ENCODE measurements at regions of chr12 and their contacts with region 1.

Region 1: DNA sequence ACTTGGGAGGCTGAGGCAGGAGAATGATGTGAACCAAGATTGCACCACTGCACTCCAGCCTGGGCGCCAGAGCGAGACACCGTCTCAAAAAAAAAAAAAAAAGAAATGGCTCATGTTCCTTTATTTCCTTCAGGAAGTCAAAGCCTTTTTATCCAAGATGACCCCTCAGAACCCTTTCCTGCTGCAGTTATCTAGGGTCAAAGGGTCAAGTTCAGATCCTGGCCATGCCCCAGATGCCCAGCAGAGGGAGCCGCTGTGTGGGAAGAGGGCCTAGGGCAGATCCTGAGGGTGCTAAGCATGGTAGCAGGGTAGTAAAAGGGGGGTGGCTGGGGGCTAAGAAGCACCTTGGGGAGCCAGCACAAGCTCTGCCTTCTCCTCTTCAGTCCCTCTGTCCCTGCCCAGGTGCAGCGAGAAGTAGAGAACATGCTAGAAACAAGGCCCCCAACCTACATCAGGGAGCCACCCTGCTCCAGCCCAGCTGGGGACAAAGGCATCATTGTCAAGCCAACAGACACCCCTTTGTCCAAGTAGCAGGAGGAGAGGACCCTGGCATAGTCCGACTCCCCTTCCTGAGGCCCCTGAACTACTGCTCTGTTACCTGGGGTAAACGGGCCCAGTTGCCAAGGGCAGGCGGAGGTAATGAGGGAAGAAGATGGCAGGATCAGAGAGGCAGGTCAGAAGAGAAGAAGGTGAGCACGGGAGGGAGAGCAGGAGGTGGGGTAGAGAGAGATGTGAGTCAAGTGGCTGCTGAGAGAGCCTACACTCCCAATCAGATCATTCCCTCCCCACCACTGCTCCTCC is 6.5 kb downstream of the NFE2 start:
- DNase-seq: peak; percentile 78
- H3K4me3 Mint-ChIP-seq: no peak overlapping the region
- H3K27ac Mint-ChIP-seq: no peak overlapping the region
- H3K4me1 Mint-ChIP-seq: peaks cover 6% of the 10 kb centered on the region
- H3K27me3 Mint-ChIP-seq: peaks cover 51% of the 10 kb centered on the region

Region 2: DNA sequence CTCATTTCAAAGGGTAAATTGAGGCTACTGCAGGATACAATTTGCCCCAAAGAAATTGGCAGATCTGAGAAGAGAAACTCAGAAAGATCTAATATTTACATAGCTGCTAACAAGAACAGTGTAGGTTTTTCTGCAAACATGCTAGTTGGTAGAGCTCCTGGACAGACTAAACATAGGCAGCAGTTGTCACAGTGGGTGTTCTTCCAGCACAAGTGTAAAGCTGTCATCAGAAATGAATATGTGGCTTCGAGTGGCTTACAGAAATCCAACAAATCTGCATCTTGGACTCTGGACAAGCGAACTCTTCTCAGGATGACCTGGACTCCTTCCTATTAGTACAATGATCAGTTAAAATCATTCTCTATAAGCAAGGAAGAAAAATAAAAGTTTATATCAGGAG is 20.4 kb before region 1 on chr12:
- CTCF ChIA-PET with region 1: interaction called, 13 read pairs
- DNase-seq: no peak
- H3K4me3 Mint-ChIP-seq: no peak overlapping the region
- H3K27ac Mint-ChIP-seq: no peak overlapping the region
- H3K4me1 Mint-ChIP-seq: peaks cover 59% of the 10 kb centered on the region
- H3K27me3 Mint-ChIP-seq: no peaks in the 10 kb centered on the region

Region 3: GRCh38 chr12:54324617-54325441 is 30.5 kb after region 1 on chr12 and contains the start of gene COPZ1:
- CTCF ChIA-PET with region 1: interaction called, 16 read pairs
- DNase-seq: peak; percentile 97
- H3K4me3 Mint-ChIP-seq: peak within 1 kb of the TSS; percentile 88
- H3K27ac Mint-ChIP-seq: peak within 1 kb of the TSS; percentile 86
- H3K4me1 Mint-ChIP-seq: peaks cover 43% of the 10 kb centered on the region
- H3K27me3 Mint-ChIP-seq: peaks cover 4% of the 10 kb centered on the region

Region 4: DNA sequence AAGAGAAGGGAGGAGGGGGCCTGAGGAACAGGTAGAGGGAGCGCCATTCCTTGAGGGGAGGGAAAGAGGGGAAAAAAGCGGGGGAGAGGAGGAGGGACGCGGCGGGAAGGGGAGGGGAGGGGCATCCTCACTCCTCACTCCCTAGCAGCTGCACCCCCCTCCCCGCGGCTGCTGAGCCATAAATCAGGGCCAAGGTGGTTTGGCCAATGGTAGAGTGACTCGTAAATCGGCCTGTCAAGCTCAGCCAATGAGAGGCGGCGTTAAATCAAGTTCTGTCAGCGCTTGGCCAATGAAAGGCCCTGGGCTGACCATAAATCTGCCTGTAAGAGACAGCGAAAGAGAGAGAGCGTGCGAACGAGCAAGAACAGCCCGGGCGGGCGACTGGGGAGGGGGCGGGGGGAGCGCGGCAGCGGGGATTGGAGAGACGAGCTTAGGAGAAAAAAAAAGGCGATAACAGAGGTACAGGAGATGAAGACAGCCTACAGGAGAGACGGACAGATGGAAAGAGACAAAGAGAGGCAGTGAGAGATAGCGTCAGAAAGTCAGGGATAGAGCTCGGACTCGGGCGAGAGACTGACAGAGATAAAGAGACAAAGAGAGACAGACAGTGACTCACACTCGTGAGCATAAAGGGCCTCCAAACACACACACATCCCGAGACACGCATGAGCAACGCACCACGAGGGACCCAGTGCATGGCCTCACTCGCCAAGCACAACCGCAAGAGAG is 64.8 kb after region 1 on chr12:
- CTCF ChIA-PET with region 1: interaction called, 125 read pairs
- DNase-seq: peak; percentile 97
- H3K4me3 Mint-ChIP-seq: no peak overlapping the region
- H3K27ac Mint-ChIP-seq: no peak overlapping the region
- H3K4me1 Mint-ChIP-seq: peaks cover 32% of the 10 kb centered on the region
- H3K27me3 Mint-ChIP-seq: peaks cover 6% of the 10 kb centered on the region

Region 5: GRCh38 chr12:54379401-54380201 is 85.2 kb after region 1 on chr12:
- CTCF ChIA-PET with region 1: interaction called, 53 read pairs
- DNase-seq: peak; percentile 94
- H3K4me3 Mint-ChIP-seq: peak overlapping the region; percentile 41
- H3K27ac Mint-ChIP-seq: no peak overlapping the region
- H3K4me1 Mint-ChIP-seq: peaks cover 9% of the 10 kb centered on the region
- H3K27me3 Mint-ChIP-seq: peaks cover 48% of the 10 kb centered on the region

Measured in activated naive CD4-positive, alpha-beta T cell treated with anti-CD3 and anti-CD28 coated beads, Interleukin-2, amount 10 ng/mL, durations not matched to agents 7 days and 5 days (primary cell).